ENCODE measurements at regions of chr7 and their contacts with region 1.

Region 1: DNA sequence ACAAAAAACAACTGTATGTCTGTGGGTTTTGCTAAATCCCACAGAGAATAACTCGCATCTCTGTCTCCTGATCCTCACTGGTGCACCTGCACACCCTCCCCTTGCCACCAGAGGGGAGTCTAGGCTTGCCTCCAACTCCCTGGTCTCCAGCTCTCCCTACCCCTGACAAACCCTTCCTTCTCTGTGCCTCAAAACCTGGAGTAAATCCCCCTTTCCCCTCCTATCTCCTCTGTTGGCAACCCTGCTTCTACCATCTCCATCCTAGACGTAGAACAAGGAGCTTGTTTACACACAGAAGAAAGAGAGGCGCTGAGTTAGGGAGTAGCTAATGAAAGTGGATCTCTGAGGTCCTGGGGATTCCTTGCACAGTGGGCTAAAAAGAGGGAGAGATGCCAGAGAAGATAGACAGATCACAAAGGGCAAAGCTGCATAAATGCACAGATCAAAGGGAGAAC is 6.0 kb downstream of the MBLAC1 start:
- DNase-seq: peak; percentile 72
- H3K4me3 Mint-ChIP-seq: no peak overlapping the region
- H3K27ac Mint-ChIP-seq: no peak overlapping the region
- H3K4me1 Mint-ChIP-seq: peaks cover 13% of the 10 kb centered on the region
- H3K27me3 Mint-ChIP-seq: no peaks in the 10 kb centered on the region
- CTCF ChIP-seq: peak; percentile 70

Region 2: DNA sequence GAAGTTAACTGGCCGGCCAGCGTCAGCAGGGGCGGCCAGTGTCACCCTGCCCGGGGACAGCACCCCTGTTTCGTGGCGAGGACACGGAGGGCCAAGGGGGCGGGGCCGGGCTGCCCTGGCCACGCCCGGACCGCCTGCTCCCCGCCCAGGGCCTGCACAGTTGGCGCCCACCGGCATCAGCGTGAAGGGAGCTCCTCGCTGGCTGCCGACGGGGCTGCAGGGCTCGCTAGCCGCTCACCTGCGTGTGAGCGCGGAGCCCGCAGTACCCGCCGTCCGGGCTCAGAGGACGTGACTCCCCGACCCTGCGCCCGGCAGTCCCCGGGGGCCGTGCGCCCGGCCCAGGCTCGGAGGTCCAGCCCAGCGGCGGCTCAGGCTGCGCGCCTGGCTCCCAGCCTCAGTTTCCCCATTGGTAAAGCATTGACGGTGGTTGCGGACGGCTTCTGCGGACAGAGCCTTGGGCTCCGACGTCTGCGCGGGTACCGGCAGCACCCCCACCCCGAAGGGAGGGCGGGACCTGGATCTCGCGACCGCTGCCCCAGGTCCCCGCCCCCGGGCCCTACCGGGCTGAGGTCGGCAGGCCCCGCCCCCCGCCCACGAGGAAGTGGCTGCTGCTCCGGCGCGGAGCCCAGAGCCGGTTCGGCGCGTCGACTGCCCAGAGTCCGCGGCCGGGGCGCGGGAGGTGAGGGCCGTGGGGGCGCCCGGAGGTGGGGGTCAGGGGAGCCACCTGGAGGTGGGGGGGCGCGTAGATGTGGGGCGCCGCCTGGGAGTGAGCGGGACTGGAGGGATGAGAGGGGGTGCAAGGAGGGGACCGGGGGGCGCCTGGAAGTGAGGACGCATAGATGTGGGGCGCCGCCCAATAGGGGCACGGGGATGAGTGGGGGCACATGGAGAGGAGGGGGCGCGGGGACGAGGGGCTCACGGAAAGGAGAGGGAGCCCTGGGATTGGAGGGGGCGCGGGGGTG is 758.3 kb before region 1 on chr7 and contains the start of gene ARPC1B:
- CTCF ChIA-PET with region 1: no interaction called
- intact Hi-C with region 1: no loop called
- DNase-seq: peak; percentile 70
- H3K4me3 Mint-ChIP-seq: peak within 1 kb of the TSS; percentile 58
- H3K27ac Mint-ChIP-seq: no peak within 1 kb of the TSS
- H3K4me1 Mint-ChIP-seq: peaks cover 11% of the 10 kb centered on the region
- H3K27me3 Mint-ChIP-seq: no peaks in the 10 kb centered on the region
- CTCF ChIP-seq: no peak
- total RNA-seq, gene ARPC1B: 107 and 108 TPM in 2 replicates

Region 3: DNA sequence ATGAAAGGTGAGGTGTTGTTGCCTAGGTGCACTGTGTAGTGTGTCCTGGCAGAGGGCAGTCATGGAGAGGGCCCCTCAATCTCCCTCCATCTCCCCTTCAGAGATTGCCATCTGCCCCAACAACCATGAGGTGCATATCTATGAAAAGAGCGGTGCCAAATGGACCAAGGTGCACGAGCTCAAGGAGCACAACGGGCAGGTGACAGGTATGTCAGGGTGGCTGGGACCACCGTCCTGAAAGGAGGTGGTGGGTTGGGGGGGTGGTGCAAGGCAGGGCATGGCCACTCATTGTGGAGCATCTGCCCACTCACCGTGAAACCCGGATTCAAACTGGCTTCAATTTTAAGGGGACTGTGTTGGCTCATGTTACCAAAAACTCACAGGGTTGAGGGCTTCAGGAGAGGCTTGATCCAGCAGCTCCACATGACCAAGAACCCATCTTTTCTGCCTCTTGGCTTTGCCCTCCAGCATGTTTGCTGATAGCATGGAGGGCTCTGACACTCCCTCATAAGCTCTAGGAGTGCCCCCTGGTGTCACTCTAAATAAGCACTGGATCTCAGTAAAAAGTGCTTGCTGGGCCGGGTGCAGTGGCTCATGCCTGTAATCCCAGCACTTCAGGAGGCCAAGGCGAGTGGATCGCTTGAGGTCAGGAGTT is 746.0 kb before region 1 on chr7:
- CTCF ChIA-PET with region 1: no interaction called
- intact Hi-C with region 1: no loop called
- DNase-seq: peak; percentile 16
- H3K4me3 Mint-ChIP-seq: no peak overlapping the region
- H3K27ac Mint-ChIP-seq: no peak overlapping the region
- H3K4me1 Mint-ChIP-seq: no peaks in the 10 kb centered on the region
- H3K27me3 Mint-ChIP-seq: no peaks in the 10 kb centered on the region
- CTCF ChIP-seq: no peak

Region 4: GRCh38 chr7:99679032-99679399 is 453.7 kb before region 1 on chr7:
- CTCF ChIA-PET with region 1: no interaction called
- intact Hi-C with region 1: no loop called
- DNase-seq: peak; percentile 65
- H3K4me3 Mint-ChIP-seq: peak overlapping the region; percentile 68
- H3K27ac Mint-ChIP-seq: peak overlapping the region; percentile 90
- H3K4me1 Mint-ChIP-seq: peaks cover 26% of the 10 kb centered on the region
- H3K27me3 Mint-ChIP-seq: no peaks in the 10 kb centered on the region
- CTCF ChIP-seq: no peak

Region 5: GRCh38 chr7:100211342-100211780 is 78.6 kb after region 1 on chr7:
- CTCF ChIA-PET with region 1: no interaction called
- intact Hi-C with region 1: loop called (anchors 5 kb)
- DNase-seq: no peak
- H3K4me3 Mint-ChIP-seq: no peak overlapping the region
- H3K27ac Mint-ChIP-seq: no peak overlapping the region
- H3K4me1 Mint-ChIP-seq: no peaks in the 10 kb centered on the region
- H3K27me3 Mint-ChIP-seq: peaks cover 40% of the 10 kb centered on the region
- CTCF ChIP-seq: no peak

Region 6: DNA sequence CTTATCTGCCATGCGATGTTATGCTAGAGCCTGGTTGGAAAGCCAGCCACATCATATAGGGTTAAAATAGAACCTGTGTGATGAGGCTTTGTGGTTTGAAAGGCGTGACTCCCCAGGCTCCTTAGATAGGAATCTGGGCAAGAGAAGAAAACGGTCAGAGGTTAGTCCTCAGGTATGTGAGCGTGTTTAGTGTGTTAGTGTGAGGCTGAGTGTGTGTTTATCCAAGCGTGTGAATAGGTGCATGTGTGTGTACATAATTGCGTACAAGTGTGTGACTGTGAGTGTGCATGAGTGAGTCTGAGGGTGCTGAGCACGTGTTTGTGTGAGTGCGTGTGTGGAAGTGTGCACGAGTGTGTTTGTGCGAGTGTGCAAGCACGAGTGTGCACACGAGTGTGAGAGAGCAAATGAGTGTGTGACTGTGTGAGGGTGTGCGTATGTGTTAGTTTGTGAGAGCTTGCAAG is 1309.8 kb after region 1 on chr7:
- CTCF ChIA-PET with region 1: no interaction called
- intact Hi-C with region 1: no loop called
- DNase-seq: no peak
- H3K4me3 Mint-ChIP-seq: no peak overlapping the region
- H3K27ac Mint-ChIP-seq: no peak overlapping the region
- H3K4me1 Mint-ChIP-seq: peaks cover 11% of the 10 kb centered on the region
- H3K27me3 Mint-ChIP-seq: peaks cover 45% of the 10 kb centered on the region
- CTCF ChIP-seq: no peak